ENCODE measurements at regions of chr6 and their contacts with region 1.

Region 1: GRCh38 chr6:31197559-31198305 is 27.2 kb upstream of the POU5F1 start:
- DNase-seq: peak; percentile 97
- ATAC-seq: peak; percentile 69
- H3K4me3 Mint-ChIP-seq: peak overlapping the region; percentile 76
- H3K27ac Mint-ChIP-seq: peak overlapping the region; percentile 80
- H3K4me1 Mint-ChIP-seq: peaks cover 50% of the 10 kb centered on the region
- H3K27me3 Mint-ChIP-seq: no peaks in the 10 kb centered on the region

Region 2: DNA sequence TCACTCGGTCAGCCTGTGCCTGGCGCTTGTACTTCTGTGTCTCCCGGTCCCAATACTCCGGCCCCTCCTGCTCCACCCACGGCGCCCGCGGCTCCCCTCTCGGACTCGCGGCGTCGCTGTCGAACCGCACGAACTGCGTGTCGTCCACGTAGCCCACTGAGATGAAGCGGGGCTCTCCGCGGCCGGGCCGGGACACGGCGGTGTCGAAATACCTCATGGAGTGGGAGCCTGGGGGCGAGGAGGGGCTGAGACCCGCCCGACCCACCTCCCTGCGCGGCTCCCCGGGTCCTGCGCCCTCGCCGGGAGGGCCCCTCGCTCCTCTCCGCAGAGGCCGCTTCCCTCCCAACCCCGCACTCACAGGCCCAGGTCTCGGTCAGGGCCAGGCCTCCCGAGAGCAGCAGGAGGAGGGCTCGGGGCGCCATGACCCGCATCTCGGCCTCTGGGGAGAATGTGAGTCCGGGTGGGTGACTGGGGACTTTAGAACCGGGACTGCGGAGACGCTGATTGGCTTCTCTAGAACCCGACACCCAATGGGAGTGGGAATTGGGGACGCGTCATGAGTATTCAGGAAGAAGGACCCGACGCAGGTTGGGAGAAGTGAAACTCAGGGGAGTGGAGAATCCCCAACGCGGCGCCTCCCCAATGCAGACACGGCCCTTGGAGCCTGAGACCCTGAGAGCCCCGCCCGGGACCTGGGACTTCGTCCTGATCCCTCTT is 74.1 kb after region 1 on chr6 and contains the start of gene HLA-C:
- CTCF ChIA-PET with region 1: interaction called, 4 read pairs
- POLR2A ChIA-PET with region 1: interaction called, 7 read pairs
- intact Hi-C with region 1: loop called (anchors 1 to 2 kb)
- DNase-seq: peak; percentile 92
- ATAC-seq: peak; percentile 89
- H3K4me3 Mint-ChIP-seq: peak within 1 kb of the TSS; percentile 95
- H3K27ac Mint-ChIP-seq: peak within 1 kb of the TSS; percentile 99
- H3K4me1 Mint-ChIP-seq: peaks cover 55% of the 10 kb centered on the region
- H3K27me3 Mint-ChIP-seq: no peaks in the 10 kb centered on the region
- total RNA-seq, gene HLA-C: 660 to 678 TPM

Region 3: GRCh38 chr6:31356946-31357466 is 159.3 kb after region 1 on chr6 and contains the start of gene HLA-B:
- CTCF ChIA-PET with region 1: interaction called, 4 read pairs
- POLR2A ChIA-PET with region 1: interaction called, 3 read pairs
- intact Hi-C with region 1: loop called (anchors 1 to 2 kb)
- DNase-seq: peak; percentile 91
- ATAC-seq: peak; percentile 80
- H3K4me3 Mint-ChIP-seq: peak within 1 kb of the TSS; percentile 98
- H3K27ac Mint-ChIP-seq: peak within 1 kb of the TSS; percentile 99
- H3K4me1 Mint-ChIP-seq: peaks cover 56% of the 10 kb centered on the region
- H3K27me3 Mint-ChIP-seq: peaks cover 5% of the 10 kb centered on the region
- total RNA-seq, gene HLA-B: 2,101 to 2,412 TPM

Region 4: GRCh38 chr6:31403283-31403989 is 205.7 kb after region 1 on chr6 and contains the start of gene MICA:
- CTCF ChIA-PET with region 1: interaction called, 4 read pairs
- POLR2A ChIA-PET with region 1: no interaction called
- intact Hi-C with region 1: loop called in 1 of 2 experiments (anchors 1 kb)
- DNase-seq: peak; percentile 83
- ATAC-seq: peak; percentile 68
- H3K4me3 Mint-ChIP-seq: peak within 1 kb of the TSS; percentile 71
- H3K27ac Mint-ChIP-seq: peak within 1 kb of the TSS; percentile 71
- H3K4me1 Mint-ChIP-seq: peaks cover 62% of the 10 kb centered on the region
- H3K27me3 Mint-ChIP-seq: no peaks in the 10 kb centered on the region
- total RNA-seq, gene MICA: 6.3 to 7.1 TPM

Region 5: GRCh38 chr6:31901953-31902643 is 704.4 kb after region 1 on chr6 and contains the start of gene ZBTB12:
- CTCF ChIA-PET with region 1: no interaction called
- POLR2A ChIA-PET with region 1: no interaction called
- intact Hi-C with region 1: loop called in 1 of 2 experiments (anchors 1 kb)
- DNase-seq: peak; percentile 92
- ATAC-seq: peak; percentile 63
- H3K4me3 Mint-ChIP-seq: peak within 1 kb of the TSS; percentile 69
- H3K27ac Mint-ChIP-seq: peak within 1 kb of the TSS; percentile 78
- H3K4me1 Mint-ChIP-seq: peaks cover 25% of the 10 kb centered on the region
- H3K27me3 Mint-ChIP-seq: no peaks in the 10 kb centered on the region
- total RNA-seq, gene ZBTB12: 1.9 to 2.4 TPM

Region 6: GRCh38 chr6:33147807-33148666 is 1950.3 kb after region 1 on chr6:
- CTCF ChIA-PET with region 1: no interaction called
- POLR2A ChIA-PET with region 1: no interaction called
- intact Hi-C with region 1: no loop called
- DNase-seq: no peak
- ATAC-seq: no peak
- H3K4me3 Mint-ChIP-seq: no peak overlapping the region
- H3K27ac Mint-ChIP-seq: no peak overlapping the region
- H3K4me1 Mint-ChIP-seq: no peaks in the 10 kb centered on the region
- H3K27me3 Mint-ChIP-seq: peaks cover 23% of the 10 kb centered on the region

Measured in activated CD4-positive, alpha-beta T cell treated with anti-CD3 and anti-CD28 coated beads for 36 hours (primary cell).